PC-9 (cell line): ENCODE measurements at regions of chr14 and their contacts with region 1.

Region 1: DNA sequence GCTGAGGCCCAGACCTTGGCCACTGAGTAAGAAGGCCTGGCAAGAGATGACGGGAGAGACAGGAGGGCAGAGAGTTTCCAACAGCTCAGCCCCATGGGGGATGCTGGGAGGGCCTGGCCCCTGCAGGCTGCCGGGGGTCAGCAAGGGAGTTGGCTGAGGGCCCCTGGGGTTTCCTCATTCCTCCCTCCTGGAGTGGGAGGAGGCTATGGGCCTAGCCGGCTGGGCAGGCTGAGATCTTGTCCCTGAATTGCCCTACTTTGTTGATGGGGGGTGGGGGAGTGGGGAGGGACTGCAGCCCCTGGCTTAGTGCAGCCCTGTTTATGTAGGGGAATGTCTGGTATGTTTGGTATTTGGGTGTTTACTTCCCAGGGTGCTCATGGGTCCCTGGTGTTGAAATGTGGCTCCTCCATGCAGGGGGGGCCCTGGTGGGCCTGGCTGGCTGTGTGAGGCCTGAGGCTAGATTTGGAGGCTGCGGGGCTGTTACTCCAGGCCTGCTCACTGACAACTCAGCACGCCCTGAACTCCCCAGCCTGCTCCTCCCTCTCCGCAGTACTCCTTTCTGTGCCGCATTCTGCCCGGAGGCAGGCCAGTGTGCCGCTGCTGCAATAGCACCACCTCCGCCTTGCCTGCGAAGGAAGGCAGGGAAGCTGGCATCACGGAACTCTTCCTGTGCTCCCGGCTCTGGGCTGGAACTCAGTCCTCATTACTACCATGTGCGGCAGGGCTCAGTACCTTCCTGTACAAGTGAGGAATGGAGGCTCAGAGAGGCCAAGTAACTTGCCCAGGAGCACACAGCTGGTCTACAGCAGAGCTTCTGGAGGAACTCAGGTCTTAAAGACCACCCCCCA is 25.3 kb downstream of the JDP2 start:
- DNase-seq: peak; percentile 100
- H3K4me3 ChIP-seq: peak overlapping the region; percentile 17; the same call in 1 of the 2 replicates
- H3K27ac ChIP-seq: peak overlapping the region; percentile 93
- H3K4me1 ChIP-seq: peaks cover 96% of the 10 kb centered on the region
- H3K27me3 ChIP-seq: no peaks in the 10 kb centered on the region
- CTCF ChIP-seq: peak; percentile 26; the same call in 1 of the 2 replicates

Region 2: DNA sequence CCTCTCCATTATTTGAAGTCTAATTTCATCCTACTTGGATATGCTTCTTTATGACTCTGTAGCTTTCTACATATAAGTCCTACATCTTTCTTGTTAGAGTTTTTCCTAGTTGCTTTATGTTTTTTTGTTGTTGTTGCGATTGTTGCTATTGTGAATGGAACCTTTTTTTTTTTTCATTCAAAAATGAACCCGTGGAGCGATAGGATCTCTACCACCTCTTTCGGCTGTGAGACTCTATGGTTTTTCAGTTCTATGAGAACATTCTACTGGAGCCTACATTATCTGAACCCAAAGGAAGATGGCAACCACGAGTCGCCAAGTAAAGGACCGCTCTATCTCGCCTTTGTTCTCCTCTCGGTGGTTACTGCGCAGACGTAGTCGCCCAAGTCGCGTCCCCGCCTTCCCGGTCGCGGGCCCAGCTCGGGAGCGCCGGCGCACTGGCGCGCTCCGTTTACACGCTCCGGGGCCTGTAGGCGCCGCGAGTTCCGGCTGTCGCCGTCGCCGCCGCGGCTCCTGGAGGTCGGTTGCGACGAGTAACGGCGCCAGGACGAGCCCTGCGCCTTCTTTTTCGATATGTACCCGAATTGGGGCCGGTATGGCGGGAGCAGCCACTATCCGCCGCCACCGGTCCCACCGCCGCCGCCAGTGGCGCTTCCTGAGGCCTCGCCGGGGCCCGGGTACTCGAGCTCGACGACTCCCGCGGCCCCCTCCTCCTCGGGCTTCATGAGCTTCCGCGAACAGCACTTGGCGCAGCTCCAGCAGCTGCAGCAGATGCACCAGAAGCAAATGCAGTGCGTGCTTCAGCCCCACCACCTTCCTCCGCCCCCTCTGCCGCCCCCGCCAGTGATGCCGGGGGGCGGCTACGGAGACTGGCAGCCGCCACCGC is 690.0 kb before region 1 on chr14 and contains the start of gene YLPM1:
- CTCF ChIA-PET with region 1: no interaction called
- POLR2A ChIA-PET with region 1: interaction called, 26 read pairs
- intact Hi-C with region 1: no loop called
- DNase-seq: peak; percentile 98 to 99
- H3K4me3 ChIP-seq: peak within 1 kb of the TSS; percentile 80
- H3K27ac ChIP-seq: peak within 1 kb of the TSS; percentile 55
- H3K4me1 ChIP-seq: peaks cover 45% of the 10 kb centered on the region
- H3K27me3 ChIP-seq: no peaks in the 10 kb centered on the region
- CTCF ChIP-seq: peak; percentile 40; the same call in 1 of the 2 replicates
- total RNA-seq, gene YLPM1: 146 and 170 TPM in 2 replicates

Region 3: DNA sequence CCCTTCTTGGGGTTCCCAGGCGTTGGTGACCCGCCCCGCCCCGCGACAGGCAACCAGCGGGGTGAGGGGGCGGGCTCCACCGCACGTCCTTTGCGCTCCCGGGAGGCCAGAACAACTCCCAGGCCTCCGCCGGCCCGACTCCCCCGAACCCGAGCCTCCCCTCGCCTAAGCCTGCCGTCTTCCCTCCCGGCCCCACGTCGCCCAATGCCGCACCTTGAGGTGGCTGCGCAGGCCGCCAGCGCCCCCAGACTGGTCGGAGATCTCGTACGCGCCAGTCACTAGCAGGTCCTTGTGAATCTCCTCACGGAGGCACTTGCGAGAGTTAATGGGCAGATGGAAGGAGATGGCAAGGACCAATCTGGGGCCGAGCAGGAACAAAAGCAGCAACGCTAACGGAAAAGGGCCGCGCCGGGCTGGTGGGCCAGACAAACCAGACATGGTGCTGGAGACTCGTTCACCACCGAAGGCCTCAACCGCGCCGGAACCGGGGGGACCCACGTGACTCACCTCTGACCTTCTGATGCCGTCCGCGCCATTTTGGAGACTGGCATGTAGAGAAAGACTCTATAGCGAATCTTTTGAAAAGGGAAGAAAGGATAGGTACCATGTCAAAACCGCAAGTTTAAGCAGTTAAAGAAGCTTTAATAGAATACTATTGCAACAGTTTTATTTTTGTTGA is 276.8 kb before region 1 on chr14 and contains the start of gene TMED10:
- CTCF ChIA-PET with region 1: no interaction called
- POLR2A ChIA-PET with region 1: interaction called, 3 read pairs
- intact Hi-C with region 1: loop called (anchors 5 kb)
- DNase-seq: peak; percentile 84 to 96
- H3K4me3 ChIP-seq: peak within 1 kb of the TSS; percentile 80
- H3K27ac ChIP-seq: peak within 1 kb of the TSS; percentile 94
- H3K4me1 ChIP-seq: peaks cover 26% of the 10 kb centered on the region
- H3K27me3 ChIP-seq: no peaks in the 10 kb centered on the region
- CTCF ChIP-seq: no peak
- total RNA-seq, gene TMED10: 709 and 770 TPM in 2 replicates

Region 4: GRCh38 chr14:75399821-75400678 is 53.1 kb before region 1 on chr14:
- CTCF ChIA-PET with region 1: interaction called, 6 read pairs
- POLR2A ChIA-PET with region 1: interaction called, 5 read pairs
- intact Hi-C with region 1: loop called (anchors 1 kb)
- DNase-seq: peak; percentile 100
- H3K4me3 ChIP-seq: peak overlapping the region; percentile 17; the same call in 1 of the 2 replicates
- H3K27ac ChIP-seq: peak overlapping the region; percentile 70
- H3K4me1 ChIP-seq: peaks cover 31% of the 10 kb centered on the region
- H3K27me3 ChIP-seq: no peaks in the 10 kb centered on the region
- CTCF ChIP-seq: no peak

Region 5: DNA sequence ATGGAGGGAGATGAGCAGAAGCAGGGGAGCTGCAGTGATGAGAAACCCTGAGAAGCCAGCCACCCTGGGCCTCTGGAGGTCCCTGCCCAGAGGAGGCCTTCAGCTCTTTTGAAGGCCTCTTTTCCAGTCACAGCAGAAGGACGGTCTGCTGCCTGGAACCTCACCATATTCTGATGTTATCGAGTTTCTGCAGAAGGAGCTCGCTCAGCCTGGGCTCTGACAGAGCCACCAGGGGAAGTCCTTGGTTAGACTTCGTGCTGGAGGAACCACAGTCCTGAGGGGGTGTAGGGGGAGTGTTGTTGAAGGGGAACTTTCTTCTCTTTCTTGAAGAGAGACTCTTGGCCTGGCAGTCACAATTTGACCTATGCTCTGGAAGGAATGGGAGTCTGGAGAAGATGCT is 44.1 kb after region 1 on chr14:
- CTCF ChIA-PET with region 1: no interaction called
- POLR2A ChIA-PET with region 1: interaction called, 4 read pairs
- intact Hi-C with region 1: loop called (anchors 1 kb)
- DNase-seq: no peak
- H3K4me3 ChIP-seq: no peak overlapping the region
- H3K27ac ChIP-seq: no peak overlapping the region
- H3K4me1 ChIP-seq: peaks cover 4% of the 10 kb centered on the region; the same call in 1 of the 2 replicates
- H3K27me3 ChIP-seq: no peaks in the 10 kb centered on the region
- CTCF ChIP-seq: no peak

Region 6: DNA sequence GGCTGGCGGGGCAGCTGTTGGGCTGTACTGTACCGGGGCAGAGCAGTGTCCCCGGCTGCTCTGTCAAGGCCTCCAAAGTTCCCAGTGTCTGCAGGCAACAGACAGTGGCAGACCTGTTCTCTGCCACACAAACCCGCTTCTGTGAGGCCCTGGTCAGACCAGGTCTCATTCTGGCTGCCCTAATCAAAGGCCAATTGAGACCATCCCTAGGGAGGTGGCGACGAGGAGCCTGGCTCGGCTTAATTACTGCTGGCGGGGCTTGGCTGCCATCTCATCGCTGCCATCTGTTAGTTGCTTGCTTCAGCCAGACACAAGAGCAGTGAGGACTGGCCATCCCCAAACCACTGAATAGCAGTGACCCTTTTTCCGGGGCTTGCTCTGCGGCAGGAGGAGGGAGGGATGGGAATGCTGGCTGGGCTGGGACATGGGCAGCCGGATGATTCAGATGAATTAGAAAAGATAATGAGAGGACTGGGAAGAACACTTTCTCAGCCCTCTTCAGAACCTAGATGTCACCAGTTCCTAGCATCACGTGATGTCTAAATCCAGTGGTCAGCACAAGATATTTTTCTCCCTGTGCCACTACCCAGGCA is 183.1 kb after region 1 on chr14:
- CTCF ChIA-PET with region 1: no interaction called
- POLR2A ChIA-PET with region 1: no interaction called
- intact Hi-C with region 1: loop called (anchors 10 kb)
- DNase-seq: peak in 1 of 2 experiments; percentile 45
- H3K4me3 ChIP-seq: no peak overlapping the region
- H3K27ac ChIP-seq: peak overlapping the region; percentile 71
- H3K4me1 ChIP-seq: peaks cover 42% of the 10 kb centered on the region
- H3K27me3 ChIP-seq: no peaks in the 10 kb centered on the region
- CTCF ChIP-seq: no peak

Region 7: GRCh38 chr14:77040059-77040740 is 1587.1 kb after region 1 on chr14:
- CTCF ChIA-PET with region 1: no interaction called
- POLR2A ChIA-PET with region 1: no interaction called
- intact Hi-C with region 1: loop called (anchors 5 kb)
- DNase-seq: peak; percentile 99
- H3K4me3 ChIP-seq: peak overlapping the region; percentile 41
- H3K27ac ChIP-seq: peak overlapping the region; percentile 85
- H3K4me1 ChIP-seq: peaks cover 95% of the 10 kb centered on the region
- H3K27me3 ChIP-seq: no peaks in the 10 kb centered on the region
- CTCF ChIP-seq: no peak